ENCODE measurements at regions of chr14 and their contacts with region 1.

Region 1: DNA sequence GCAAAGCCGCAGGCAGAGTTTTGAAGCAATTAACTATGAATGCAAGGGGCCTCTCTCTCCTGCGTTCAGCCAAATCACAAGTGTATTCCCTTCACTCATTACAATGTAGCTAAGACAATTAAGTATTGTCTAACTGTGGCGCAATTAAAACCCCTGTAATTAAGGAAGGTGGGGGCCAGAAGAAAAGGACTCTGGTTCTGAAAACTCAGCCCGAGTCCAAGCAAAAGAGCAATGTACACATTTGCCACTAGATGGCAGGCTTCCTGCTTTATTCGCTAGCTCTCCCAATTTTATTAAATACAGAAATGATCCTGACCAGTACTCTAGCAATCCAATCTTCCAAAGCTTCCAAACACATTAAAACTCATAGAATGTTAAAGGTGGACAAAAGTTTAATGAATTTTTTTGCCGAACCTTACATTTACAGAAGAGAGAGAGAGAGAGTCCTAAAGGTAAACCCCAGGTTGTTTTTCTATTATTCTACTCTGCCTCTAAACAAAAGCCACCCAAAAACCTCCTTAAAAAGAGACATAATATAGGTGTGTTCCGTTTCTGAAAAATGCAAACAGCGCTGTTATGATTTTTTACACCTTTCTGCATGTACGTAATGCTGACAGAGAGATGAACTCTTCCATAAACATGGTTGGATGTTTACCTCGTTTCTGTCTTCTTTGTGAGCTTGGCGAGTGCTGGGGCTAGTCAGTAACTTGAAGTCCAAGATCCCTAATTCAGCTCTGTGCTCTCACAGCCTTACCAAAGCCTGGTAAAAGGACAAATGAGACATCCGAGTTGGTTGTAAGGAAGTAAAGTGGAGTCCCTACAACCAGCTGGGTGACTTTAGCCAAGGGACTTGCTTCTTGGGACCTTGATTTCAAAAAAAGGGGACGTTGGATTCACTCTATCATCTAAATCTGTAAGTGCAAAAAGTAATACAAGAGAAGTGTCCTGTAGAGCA is 50.9 kb upstream of the VASH1 start:
- DNase-seq: peak in 14 of 35 experiments; percentile 3 to 67 (median 8)
- ATAC-seq: peak in 2 of 4 experiments; percentile 28 to 32
- H3K4me3 ChIP-seq: no peak overlapping the region
- H3K4me3 Mint-ChIP-seq: no peak overlapping the region
- H3K27ac ChIP-seq: no peak overlapping the region
- H3K27ac Mint-ChIP-seq: no peak overlapping the region
- H3K4me1 ChIP-seq: no peaks in the 10 kb centered on the region
- H3K4me1 Mint-ChIP-seq: no peaks in the 10 kb centered on the region
- H3K27me3 ChIP-seq: peaks cover 0 to 13% of the 10 kb centered on the region in 2 experiments
- H3K27me3 Mint-ChIP-seq: peaks cover 10 to 14% of the 10 kb centered on the region in 2 donors

Region 2: GRCh38 chr14:76784266-76785264 is 74.2 kb after region 1 on chr14:
- CTCF ChIA-PET with region 1: interaction called, 4 to 27 read pairs
- POLR2A ChIA-PET with region 1: no interaction called
- DNase-seq: peak; percentile 20 to 70 (median 45)
- ATAC-seq: peak; percentile 76 to 98 (median 84)
- H3K4me3 ChIP-seq: no peak overlapping the region
- H3K4me3 Mint-ChIP-seq: no peak overlapping the region
- H3K27ac ChIP-seq: no peak overlapping the region
- H3K27ac Mint-ChIP-seq: peak overlapping the region; percentile 23 to 24
- H3K4me1 ChIP-seq: peaks cover 0 to 4% of the 10 kb centered on the region in 2 experiments
- H3K4me1 Mint-ChIP-seq: peaks cover 17 to 29% (median 26%) of the 10 kb centered on the region in 3 donors
- H3K27me3 ChIP-seq: no peaks in the 10 kb centered on the region
- H3K27me3 Mint-ChIP-seq: no peaks in the 10 kb centered on the region

Region 3: GRCh38 chr14:76810953-76811400 is 100.6 kb after region 1 on chr14:
- CTCF ChIA-PET with region 1: interaction called, 3 to 10 read pairs
- POLR2A ChIA-PET with region 1: interaction called in 1 of 2 experiments, 3 read pairs
- DNase-seq: peak in 11 of 35 experiments; percentile 4 to 55 (median 11)
- ATAC-seq: peak in 3 of 4 experiments; percentile 16 to 27 (median 18)
- H3K4me3 ChIP-seq: peak overlapping the region; percentile 30 to 75
- H3K4me3 Mint-ChIP-seq: peak overlapping the region; percentile 90 to 97 (median 93)
- H3K27ac ChIP-seq: peak overlapping the region; percentile 58
- H3K27ac Mint-ChIP-seq: peak overlapping the region; percentile 53 to 81
- H3K4me1 ChIP-seq: peaks cover 10 to 26% of the 10 kb centered on the region in 2 experiments
- H3K4me1 Mint-ChIP-seq: peaks cover 32 to 50% (median 32%) of the 10 kb centered on the region in 3 donors
- H3K27me3 ChIP-seq: no peaks in the 10 kb centered on the region
- H3K27me3 Mint-ChIP-seq: no peaks in the 10 kb centered on the region

Measured in T-cell (primary cell).